ENCODE measurements at regions of chr14 and their contacts with region 1.

Region 1: DNA sequence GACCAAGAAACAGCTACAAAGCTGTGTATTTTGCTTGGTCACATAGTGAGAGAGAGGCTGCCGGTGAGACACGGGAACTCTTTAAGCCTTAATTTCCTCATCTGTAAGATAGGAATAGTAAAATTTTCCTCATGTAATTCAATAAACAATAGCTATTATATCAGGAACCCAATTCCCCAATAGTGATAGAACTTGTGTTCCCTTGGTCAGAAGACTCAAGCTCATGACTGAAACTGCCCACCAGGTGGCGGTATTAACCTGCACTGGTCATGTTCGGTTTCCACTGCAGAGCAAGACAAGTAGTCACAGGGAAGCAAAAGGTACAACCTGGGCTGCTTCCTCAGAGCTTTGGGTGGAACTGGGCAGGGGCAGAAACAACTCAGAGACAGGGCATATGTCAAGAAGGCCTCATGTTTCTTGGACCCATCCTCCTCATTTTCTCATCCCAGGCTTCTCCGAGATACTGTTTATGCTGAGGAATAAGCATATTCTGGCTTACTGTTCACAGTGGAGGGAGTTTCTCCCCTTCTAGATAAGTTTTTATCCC is 4.2 kb upstream of the AJUBA start:
- DNase-seq: peak; percentile 86
- H3K4me3 ChIP-seq: no peak overlapping the region
- H3K27ac ChIP-seq: no peak overlapping the region
- H3K4me1 ChIP-seq: peaks cover 6% of the 10 kb centered on the region
- H3K27me3 ChIP-seq: no peaks in the 10 kb centered on the region
- CTCF ChIP-seq: peak; percentile 78 to 82
- POLR2A ChIP-seq: no peak

Region 2: DNA sequence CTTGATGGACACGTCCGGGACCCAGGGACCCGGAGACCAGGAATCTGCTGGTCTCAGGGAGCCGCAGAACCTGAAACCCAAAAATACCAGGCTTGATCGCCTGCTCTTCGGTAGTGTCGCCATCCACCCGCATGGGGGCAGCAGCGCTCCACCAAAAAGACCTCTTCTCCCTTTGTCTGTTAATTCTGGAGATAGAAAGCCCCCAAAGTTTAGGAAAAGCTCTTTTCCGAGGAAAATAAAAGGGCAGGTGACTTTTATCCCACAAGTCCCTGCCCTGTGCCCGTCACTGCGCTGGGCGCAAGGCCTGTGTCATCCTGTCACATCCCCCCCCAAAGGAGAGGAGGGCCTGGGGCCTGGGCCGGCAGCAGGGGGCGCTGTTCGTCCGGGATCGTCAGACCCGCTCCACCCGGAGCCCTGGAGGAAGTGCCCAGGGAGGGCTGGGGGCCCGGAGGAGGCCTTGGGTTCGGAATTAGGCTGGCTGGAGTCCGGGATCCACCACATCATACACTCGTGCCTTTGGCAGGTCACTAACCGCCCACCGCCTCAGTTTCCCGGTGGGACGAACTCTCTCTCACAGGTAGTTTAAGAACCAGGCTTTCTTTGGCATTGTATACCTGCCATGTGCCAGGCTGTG is 429.5 kb before region 1 on chr14:
- CTCF ChIA-PET with region 1: interaction called, 23 read pairs
- POLR2A ChIA-PET with region 1: interaction called, 4 read pairs
- dilution Hi-C with region 1: no loop called
- intact Hi-C with region 1: loop called (anchors 1 kb)
- DNase-seq: peak; percentile 71
- H3K4me3 ChIP-seq: peak overlapping the region in 2 of 3 experiments; percentile 10 to 14
- H3K27ac ChIP-seq: peak overlapping the region; percentile 88
- H3K4me1 ChIP-seq: peaks cover 52% of the 10 kb centered on the region
- H3K27me3 ChIP-seq: no peaks in the 10 kb centered on the region
- CTCF ChIP-seq: peak; percentile 84 to 99
- POLR2A ChIP-seq: no peak

Region 3: DNA sequence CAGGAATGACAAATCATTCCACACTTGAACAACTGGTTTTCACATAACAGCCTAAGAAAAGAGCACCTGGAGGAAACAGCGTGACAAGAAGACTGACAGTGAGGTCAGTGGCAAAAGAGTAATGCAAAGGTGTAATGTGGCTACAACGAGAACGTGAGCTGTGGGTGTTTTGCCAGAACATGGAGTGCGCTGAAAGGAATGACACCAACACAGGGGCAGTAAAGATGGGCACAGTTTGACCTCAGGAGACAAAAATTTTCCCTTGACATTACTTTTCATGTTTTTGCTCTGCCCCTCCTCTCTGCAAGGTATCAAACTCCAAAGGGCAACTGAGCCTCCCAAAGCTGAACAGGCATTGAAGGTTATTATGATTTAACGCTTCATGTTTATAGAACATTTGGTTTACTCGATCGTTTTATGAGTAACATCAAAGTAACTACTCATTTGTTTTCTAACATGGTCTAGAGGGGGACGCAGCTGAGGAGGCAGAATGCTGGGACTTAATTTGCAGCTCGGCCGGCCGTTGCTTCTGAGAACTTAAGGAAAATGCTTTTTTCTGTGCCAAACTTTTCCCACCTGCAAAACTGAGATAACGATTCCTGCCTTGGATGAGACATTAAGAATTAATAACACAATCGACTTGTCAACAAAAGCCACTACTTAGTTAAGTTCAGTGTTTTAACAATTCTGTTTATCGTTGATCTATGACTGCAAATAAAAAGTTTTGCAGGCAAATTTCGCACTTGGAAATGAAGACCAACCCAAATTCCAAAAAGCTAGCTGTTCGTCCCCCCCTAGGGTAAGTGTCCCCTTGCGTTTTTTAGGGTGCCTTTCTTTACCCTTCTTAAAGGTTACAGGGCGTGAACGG is 30.6 kb before region 1 on chr14:
- CTCF ChIA-PET with region 1: interaction called, 20 read pairs
- POLR2A ChIA-PET with region 1: interaction called, 3 read pairs
- dilution Hi-C with region 1: no loop called
- intact Hi-C with region 1: no loop called
- DNase-seq: peak; percentile 53
- H3K4me3 ChIP-seq: peak overlapping the region; percentile 52 to 96 (median 94)
- H3K27ac ChIP-seq: peak overlapping the region; percentile 82
- H3K4me1 ChIP-seq: peaks cover 10% of the 10 kb centered on the region
- H3K27me3 ChIP-seq: no peaks in the 10 kb centered on the region
- CTCF ChIP-seq: no peak
- POLR2A ChIP-seq: no peak

Region 4: DNA sequence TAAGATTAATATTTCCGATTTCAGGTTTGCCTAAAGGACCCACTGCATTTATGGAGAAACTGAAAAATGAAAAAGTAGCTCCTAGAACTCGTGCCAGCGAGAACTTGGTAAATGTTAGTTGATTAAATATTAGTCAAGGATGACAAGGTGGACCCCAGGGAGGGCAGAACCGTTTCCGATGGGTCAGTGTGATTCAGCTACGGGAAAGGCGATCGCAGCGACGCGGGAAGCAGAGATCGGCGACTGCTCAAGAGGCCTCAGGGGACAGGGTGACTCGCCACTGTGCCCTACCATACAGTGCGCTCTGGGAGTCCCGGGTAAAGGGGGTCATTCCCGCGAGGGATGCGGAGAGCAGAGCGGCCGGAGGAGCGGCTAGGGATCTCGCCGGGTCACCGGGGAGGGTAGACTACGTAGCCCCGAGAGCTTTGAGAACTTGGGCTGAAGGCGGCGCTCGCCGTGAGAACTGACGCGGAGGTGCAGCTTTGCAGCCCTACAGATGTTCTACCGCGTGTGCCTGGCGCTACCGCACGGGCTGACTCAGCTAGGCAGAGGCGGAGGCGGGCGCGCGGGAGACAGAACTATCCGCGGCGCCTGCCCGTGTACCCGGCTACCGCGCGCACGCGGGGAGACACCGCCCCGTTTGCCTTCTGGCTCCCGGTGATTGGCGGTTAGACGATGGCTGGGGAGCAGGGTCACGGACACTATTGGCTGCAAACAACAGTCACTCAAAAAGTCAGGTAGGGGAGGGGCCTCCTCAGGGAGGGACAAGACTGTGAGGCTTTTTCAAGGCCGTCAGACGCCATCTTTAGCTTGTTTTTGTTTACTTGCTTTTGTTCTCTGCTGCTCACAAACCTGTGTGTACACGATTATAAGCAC is 20.2 kb after region 1 on chr14:
- CTCF ChIA-PET with region 1: interaction called, 41 read pairs
- POLR2A ChIA-PET with region 1: interaction called, 4 read pairs
- dilution Hi-C with region 1: no loop called
- intact Hi-C with region 1: loop called (anchors 2 kb)
- DNase-seq: peak; percentile 99
- H3K4me3 ChIP-seq: peak overlapping the region; percentile 38 to 78 (median 56)
- H3K27ac ChIP-seq: peak overlapping the region; percentile 89
- H3K4me1 ChIP-seq: peaks cover 29% of the 10 kb centered on the region
- H3K27me3 ChIP-seq: no peaks in the 10 kb centered on the region
- CTCF ChIP-seq: peak; percentile 7 to 34
- POLR2A ChIP-seq: peak; percentile 97

Region 5: DNA sequence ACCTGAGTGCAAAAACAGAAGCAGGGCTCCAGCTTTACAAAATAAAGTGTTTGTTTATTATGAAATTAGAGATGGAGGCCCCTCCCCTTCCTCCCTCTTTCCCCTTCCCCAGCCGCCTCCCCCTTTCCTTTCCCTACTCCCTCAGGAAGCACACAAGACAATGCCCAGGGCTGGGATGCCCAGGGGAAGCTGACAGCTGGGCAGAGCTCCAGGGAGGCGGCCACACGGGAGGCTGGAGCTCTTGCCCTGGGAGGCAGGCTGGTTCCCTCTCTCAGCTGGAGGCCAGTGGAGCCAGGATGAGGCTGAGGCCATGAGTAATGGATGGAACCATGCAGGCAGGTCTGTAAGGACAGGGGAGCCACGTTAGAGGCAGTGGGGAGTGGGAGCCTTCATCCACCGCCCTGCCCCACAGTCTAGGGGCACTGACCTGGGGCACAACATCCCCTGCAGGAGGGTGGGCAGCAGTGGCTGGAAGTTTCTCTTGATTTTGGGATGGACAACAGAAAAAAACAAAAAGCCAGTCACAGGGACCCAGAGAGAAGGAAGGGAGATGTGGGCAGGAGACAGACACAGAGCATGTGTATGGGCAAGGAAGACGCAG is 60.6 kb after region 1 on chr14:
- CTCF ChIA-PET with region 1: interaction called, 1,071 read pairs
- POLR2A ChIA-PET with region 1: no interaction called
- dilution Hi-C with region 1: no loop called
- intact Hi-C with region 1: no loop called
- DNase-seq: peak; percentile 81
- H3K4me3 ChIP-seq: no peak overlapping the region
- H3K27ac ChIP-seq: peak overlapping the region; percentile 37
- H3K4me1 ChIP-seq: peaks cover 41% of the 10 kb centered on the region
- H3K27me3 ChIP-seq: no peaks in the 10 kb centered on the region
- CTCF ChIP-seq: no peak
- POLR2A ChIP-seq: no peak

Region 6: GRCh38 chr14:23113431-23114119 is 127.0 kb after region 1 on chr14:
- CTCF ChIA-PET with region 1: interaction called, 69 read pairs
- POLR2A ChIA-PET with region 1: no interaction called
- dilution Hi-C with region 1: no loop called
- intact Hi-C with region 1: loop called (anchors 5 kb)
- DNase-seq: no peak
- H3K4me3 ChIP-seq: no peak overlapping the region
- H3K27ac ChIP-seq: no peak overlapping the region
- H3K4me1 ChIP-seq: peaks cover 13% of the 10 kb centered on the region
- H3K27me3 ChIP-seq: peaks cover 9 to 10% of the 10 kb centered on the region in 2 experiments
- CTCF ChIP-seq: no peak
- POLR2A ChIP-seq: no peak

Measured in endothelial cell of umbilical vein (primary cell).